ENCODE measurements at regions of chr3 and their contacts with region 1.

Region 1: GRCh38 chr3:63961891-63962290 is 49.7 kb upstream of the SCAANT1 start:
- DNase-seq: peak in 2 of 9 experiments; percentile 69 to 80
- ATAC-seq: peak; percentile 98
- H3K4me3 ChIP-seq: no peak overlapping the region
- H3K4me3 Mint-ChIP-seq: no peak overlapping the region
- H3K27ac ChIP-seq: no peak overlapping the region
- H3K27ac Mint-ChIP-seq: no peak overlapping the region
- H3K4me1 ChIP-seq: peaks cover 16% of the 10 kb centered on the region
- H3K4me1 Mint-ChIP-seq: peaks cover 48% of the 10 kb centered on the region
- H3K27me3 ChIP-seq: no peaks in the 10 kb centered on the region
- H3K27me3 Mint-ChIP-seq: no peaks in the 10 kb centered on the region
- CTCF ChIP-seq: peak; percentile 83

Region 2: GRCh38 chr3:63175313-63175712 is 786.6 kb before region 1 on chr3:
- CTCF ChIA-PET with region 1: no interaction called
- POLR2A ChIA-PET with region 1: no interaction called
- intact Hi-C with region 1: no loop called
- DNase-seq: no peak
- ATAC-seq: no peak
- H3K4me3 ChIP-seq: no peak overlapping the region
- H3K4me3 Mint-ChIP-seq: no peak overlapping the region
- H3K27ac ChIP-seq: no peak overlapping the region
- H3K27ac Mint-ChIP-seq: no peak overlapping the region
- H3K4me1 ChIP-seq: no peaks in the 10 kb centered on the region
- H3K4me1 Mint-ChIP-seq: no peaks in the 10 kb centered on the region
- H3K27me3 ChIP-seq: no peaks in the 10 kb centered on the region
- H3K27me3 Mint-ChIP-seq: no peaks in the 10 kb centered on the region
- CTCF ChIP-seq: no peak

Region 3: DNA sequence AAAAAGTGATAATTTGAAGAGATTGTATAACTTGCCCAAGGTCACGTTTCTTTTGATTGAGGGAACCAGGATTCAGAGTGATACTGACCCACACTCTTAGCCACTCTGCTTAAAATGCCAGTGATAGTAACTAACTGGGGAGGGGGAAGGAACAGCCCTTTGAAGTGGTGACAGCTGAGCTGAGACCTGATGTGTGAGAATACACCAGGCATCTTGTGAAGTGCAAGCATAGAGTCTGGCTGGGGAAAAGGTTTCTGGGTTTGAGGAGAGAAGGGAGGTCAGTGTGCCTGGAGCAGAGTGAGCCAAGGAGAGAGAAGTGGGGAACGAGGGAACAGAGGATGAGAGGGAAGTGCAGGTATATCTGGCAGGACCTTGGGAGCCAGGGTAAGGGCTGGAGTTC is 14.3 kb before region 1 on chr3:
- CTCF ChIA-PET with region 1: interaction called, 14 read pairs
- POLR2A ChIA-PET with region 1: no interaction called
- intact Hi-C with region 1: no loop called
- DNase-seq: no peak
- ATAC-seq: no peak
- H3K4me3 ChIP-seq: no peak overlapping the region
- H3K4me3 Mint-ChIP-seq: no peak overlapping the region
- H3K27ac ChIP-seq: no peak overlapping the region
- H3K27ac Mint-ChIP-seq: no peak overlapping the region
- H3K4me1 ChIP-seq: peaks cover 23% of the 10 kb centered on the region
- H3K4me1 Mint-ChIP-seq: peaks cover 67% of the 10 kb centered on the region
- H3K27me3 ChIP-seq: no peaks in the 10 kb centered on the region
- H3K27me3 Mint-ChIP-seq: no peaks in the 10 kb centered on the region
- CTCF ChIP-seq: no peak

Region 4: DNA sequence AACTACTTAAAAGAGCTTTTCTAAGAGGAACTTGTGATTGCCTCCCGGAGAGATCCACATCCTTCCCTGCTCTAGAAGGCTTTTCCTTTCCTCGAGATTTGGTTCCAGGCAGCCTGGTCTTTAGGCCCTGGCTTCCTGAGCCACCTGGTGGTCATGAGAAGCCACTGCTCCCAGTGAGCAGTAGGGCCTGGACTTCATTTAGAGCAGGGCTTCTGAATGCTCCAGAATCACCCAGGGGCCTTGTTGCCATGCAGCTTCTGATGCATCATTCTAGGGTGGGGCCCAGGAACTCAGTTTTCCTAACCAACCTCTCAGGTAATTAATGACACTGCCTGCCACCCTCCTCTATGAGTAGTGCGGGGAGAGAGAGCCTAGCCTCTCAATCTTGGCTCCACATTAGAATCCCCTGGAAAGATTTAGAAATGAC is 31.8 kb after region 1 on chr3:
- CTCF ChIA-PET with region 1: interaction called, 313 read pairs
- POLR2A ChIA-PET with region 1: interaction called, 8 read pairs
- intact Hi-C with region 1: loop called (anchors 1 kb)
- DNase-seq: peak in 7 of 9 experiments; percentile 34 to 79 (median 62)
- ATAC-seq: peak; percentile 92
- H3K4me3 ChIP-seq: no peak overlapping the region
- H3K4me3 Mint-ChIP-seq: no peak overlapping the region
- H3K27ac ChIP-seq: no peak overlapping the region
- H3K27ac Mint-ChIP-seq: peak overlapping the region; percentile 55
- H3K4me1 ChIP-seq: peaks cover 11% of the 10 kb centered on the region
- H3K4me1 Mint-ChIP-seq: peaks cover 60% of the 10 kb centered on the region
- H3K27me3 ChIP-seq: no peaks in the 10 kb centered on the region
- H3K27me3 Mint-ChIP-seq: no peaks in the 10 kb centered on the region
- CTCF ChIP-seq: peak; percentile 77

Region 5: GRCh38 chr3:64011685-64012084 is 49.8 kb after region 1 on chr3:
- CTCF ChIA-PET with region 1: interaction called, 19 read pairs
- POLR2A ChIA-PET with region 1: no interaction called
- intact Hi-C with region 1: no loop called
- DNase-seq: no peak
- ATAC-seq: no peak
- H3K4me3 ChIP-seq: no peak overlapping the region
- H3K4me3 Mint-ChIP-seq: no peak overlapping the region
- H3K27ac ChIP-seq: no peak overlapping the region
- H3K27ac Mint-ChIP-seq: peak overlapping the region; percentile 10
- H3K4me1 ChIP-seq: no peaks in the 10 kb centered on the region
- H3K4me1 Mint-ChIP-seq: peaks cover 36% of the 10 kb centered on the region
- H3K27me3 ChIP-seq: no peaks in the 10 kb centered on the region
- H3K27me3 Mint-ChIP-seq: no peaks in the 10 kb centered on the region
- CTCF ChIP-seq: no peak

Region 6: GRCh38 chr3:64030741-64031140 is 68.8 kb after region 1 on chr3:
- CTCF ChIA-PET with region 1: interaction called, 13 read pairs
- POLR2A ChIA-PET with region 1: no interaction called
- intact Hi-C with region 1: no loop called
- DNase-seq: peak; percentile 42 to 92 (median 77)
- ATAC-seq: peak; percentile 98
- H3K4me3 ChIP-seq: peak overlapping the region; percentile 14 to 31
- H3K4me3 Mint-ChIP-seq: peak overlapping the region; percentile 84
- H3K27ac ChIP-seq: no peak overlapping the region
- H3K27ac Mint-ChIP-seq: peak overlapping the region; percentile 82
- H3K4me1 ChIP-seq: no peaks in the 10 kb centered on the region
- H3K4me1 Mint-ChIP-seq: peaks cover 6% of the 10 kb centered on the region
- H3K27me3 ChIP-seq: no peaks in the 10 kb centered on the region
- H3K27me3 Mint-ChIP-seq: peaks cover 22% of the 10 kb centered on the region
- CTCF ChIP-seq: peak; percentile 93